Left colon (tissue), 2 donors: ENCODE measurements at regions of chr20 and their contacts with region 1.

Region 1: GRCh38 chr20:60046011-60046413 is 87.8 kb downstream of the CDH26 start:
- DNase-seq: no peak
- ATAC-seq: no peak

Region 2: DNA sequence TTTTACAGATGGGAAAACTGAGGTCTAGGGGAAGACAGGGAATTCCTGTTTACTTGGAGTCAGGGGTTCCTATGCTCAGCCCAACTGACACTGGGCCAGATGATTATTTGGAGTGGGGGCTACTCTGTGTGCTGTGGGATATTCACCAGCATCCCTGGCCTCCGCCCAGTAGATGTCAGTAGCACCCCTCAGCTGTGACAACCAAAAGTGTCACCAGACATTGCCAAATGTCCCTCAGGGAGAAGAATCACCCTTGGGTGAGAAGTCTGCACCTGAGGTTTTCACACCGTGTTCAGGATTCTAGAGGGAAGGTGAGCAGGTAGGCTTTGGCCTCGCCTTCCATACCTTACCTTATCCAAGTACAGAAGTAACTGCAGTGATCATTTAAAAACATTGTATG is 60.1 kb before region 1 on chr20:
- intact Hi-C with region 1: loop called in 1 of 2 experiments (anchors 10 kb)
- DNase-seq: no peak
- ATAC-seq: no peak